ENCODE measurements at regions of chr11 and their contacts with region 1.

Region 1: DNA sequence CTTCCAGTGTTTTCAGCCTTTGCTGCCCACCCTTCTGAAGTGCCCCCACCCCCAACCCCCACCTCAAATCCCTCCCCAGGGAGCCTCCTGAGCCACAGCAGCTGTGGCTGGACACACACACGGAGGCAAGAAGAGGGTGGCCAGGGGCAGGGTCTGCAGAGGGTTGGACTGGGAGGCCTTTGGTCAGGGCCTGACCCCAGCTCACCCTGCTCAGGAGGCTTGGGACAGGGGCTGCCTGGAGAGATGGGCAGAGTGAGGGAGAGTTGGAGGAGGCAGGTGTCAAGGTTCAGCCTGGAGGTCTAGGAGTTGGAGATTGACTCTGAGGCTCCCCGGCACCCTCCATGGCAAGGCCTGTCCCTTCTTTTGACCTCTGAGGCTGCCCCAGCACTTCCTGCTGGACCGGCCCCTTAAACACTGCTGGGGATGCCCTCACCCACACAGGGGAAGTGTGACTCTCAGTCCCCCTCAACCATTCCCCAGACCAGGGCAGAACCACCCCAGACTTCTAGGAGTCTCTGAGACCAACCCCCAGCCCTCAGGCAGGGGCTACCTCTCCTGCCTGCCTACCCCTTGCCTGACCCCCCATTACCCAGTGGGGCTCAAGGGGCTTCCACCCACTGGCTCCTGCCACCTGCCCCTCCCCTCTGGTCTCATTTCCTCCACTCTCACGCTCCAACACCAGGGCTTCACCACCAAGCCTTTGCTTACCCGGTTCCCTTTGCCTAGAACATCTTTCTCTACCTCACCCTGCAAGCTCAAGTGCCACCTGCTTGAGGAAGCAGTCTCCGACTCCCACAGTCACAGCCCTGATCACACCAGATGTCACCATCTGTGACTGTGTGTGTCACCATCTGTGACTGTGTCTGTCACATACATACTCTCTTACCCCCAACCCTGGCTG is 8.6 kb downstream of the ARAP1 start:
- DNase-seq: no peak
- ATAC-seq: peak; percentile 53
- H3K4me3 ChIP-seq: peak overlapping the region; percentile 51; the same call in 1 of the 2 replicates
- H3K27ac ChIP-seq: peak overlapping the region; percentile 59
- H3K4me1 ChIP-seq: peaks cover 75% of the 10 kb centered on the region
- H3K27me3 ChIP-seq: no peaks in the 10 kb centered on the region
- CTCF ChIP-seq: no peak
- EP300 ChIP-seq: no peak
- POLR2A ChIP-seq: no peak
- RAD21 ChIP-seq: no peak

Region 2: DNA sequence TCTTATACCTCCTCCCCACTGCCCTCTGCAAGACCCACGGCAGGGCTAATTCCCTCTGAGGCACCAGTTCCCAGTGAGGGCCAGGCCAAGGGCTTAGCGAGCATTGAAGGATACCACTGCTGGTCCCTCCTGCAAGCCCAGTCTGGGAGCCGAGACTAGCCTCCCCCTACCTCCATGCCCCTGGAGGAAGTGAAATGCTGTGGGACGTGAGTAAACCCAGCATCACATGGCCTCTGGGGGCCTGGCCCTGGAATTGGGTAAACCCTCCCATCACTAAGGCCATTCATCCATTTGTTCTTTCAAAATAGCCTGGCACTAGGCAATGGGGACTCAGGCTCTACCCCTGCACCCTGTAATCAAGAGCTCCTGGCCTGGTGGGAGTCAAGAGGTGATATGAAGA is 16.1 kb before region 1 on chr11:
- CTCF ChIA-PET with region 1: interaction called, 89 read pairs
- POLR2A ChIA-PET with region 1: interaction called, 4 read pairs
- RAD21 ChIA-PET with region 1: interaction called, 18 read pairs
- SMC1A ChIA-PET with region 1: interaction called, 41 read pairs
- in situ Hi-C with region 1: no loop called
- intact Hi-C with region 1: no loop called
- DNase-seq: no peak
- ATAC-seq: 0 out of 3 replicates have a peak, but pooled peaks have one; percentile 22
- H3K4me3 ChIP-seq: no peak overlapping the region
- H3K27ac ChIP-seq: no peak overlapping the region
- H3K4me1 ChIP-seq: peaks cover 19% of the 10 kb centered on the region
- H3K27me3 ChIP-seq: no peaks in the 10 kb centered on the region
- CTCF ChIP-seq: no peak
- EP300 ChIP-seq: no peak
- POLR2A ChIP-seq: no peak
- RAD21 ChIP-seq: no peak

Region 3: DNA sequence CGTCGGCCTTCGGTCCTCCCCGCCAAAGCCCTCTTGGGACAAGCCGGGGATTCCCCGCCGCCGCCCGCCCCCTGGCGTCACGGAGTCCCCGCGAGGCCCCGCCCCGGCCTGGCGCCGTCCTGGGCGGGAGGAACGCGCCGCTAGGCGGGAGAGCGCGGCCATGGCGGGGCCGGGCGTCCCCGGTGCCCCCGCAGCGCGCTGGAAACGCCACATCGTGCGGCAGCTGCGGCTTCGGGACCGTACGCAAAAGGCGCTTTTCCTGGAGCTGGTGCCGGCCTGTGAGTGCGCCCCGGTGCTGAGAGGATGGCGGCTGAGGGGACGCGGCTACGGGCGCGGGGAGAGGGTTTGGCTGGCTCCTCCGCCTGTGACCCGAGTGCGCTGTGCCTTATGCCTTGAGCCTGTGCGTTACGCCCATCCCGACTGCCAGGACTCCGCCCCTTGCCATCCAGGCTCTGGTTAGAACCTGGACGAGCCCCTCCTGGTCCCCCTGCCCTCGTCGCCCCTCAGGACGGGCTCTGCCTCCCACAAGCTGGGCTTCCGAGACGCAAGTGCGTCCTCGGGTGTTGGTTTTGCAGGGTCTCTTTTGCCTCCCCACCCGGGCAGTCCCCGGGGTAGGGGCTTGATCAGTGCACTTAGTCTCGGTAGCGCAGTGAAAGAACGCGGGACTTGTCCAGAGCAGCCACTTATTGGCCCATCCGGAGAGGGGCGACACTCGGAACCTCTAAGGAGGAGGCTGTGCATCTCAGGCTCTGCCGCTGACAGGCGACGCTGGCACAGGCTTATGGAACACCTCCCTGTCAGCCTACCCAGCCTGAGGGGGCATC is 70.9 kb after region 1 on chr11 and contains the start of gene ATG16L2:
- CTCF ChIA-PET with region 1: interaction called, 4 read pairs
- POLR2A ChIA-PET with region 1: interaction called, 9 read pairs
- RAD21 ChIA-PET with region 1: interaction called, 3 read pairs
- SMC1A ChIA-PET with region 1: interaction called, 9 read pairs
- in situ Hi-C with region 1: no loop called
- intact Hi-C with region 1: loop called (anchors 5 kb)
- DNase-seq: no peak
- ATAC-seq: peak; percentile 74
- H3K4me3 ChIP-seq: peak within 1 kb of the TSS; percentile 89
- H3K27ac ChIP-seq: peak within 1 kb of the TSS; percentile 98
- H3K4me1 ChIP-seq: peaks cover 7% of the 10 kb centered on the region; the same call in 1 of the 2 replicates
- H3K27me3 ChIP-seq: no peaks in the 10 kb centered on the region
- CTCF ChIP-seq: peak in 2 of 3 experiments; percentile 15 to 19; a peak in 1 of 6 replicates
- EP300 ChIP-seq: 0 out of 4 replicates have a peak, but pooled peaks of 1 of the 2 experiments have one; percentile 3
- POLR2A ChIP-seq: peak; percentile 81
- RAD21 ChIP-seq: 0 out of 2 replicates have a peak, but pooled peaks have one; percentile 20
- polyA plus RNA-seq, gene ATG16L2: 1.9 to 5.3 TPM

Region 4: DNA sequence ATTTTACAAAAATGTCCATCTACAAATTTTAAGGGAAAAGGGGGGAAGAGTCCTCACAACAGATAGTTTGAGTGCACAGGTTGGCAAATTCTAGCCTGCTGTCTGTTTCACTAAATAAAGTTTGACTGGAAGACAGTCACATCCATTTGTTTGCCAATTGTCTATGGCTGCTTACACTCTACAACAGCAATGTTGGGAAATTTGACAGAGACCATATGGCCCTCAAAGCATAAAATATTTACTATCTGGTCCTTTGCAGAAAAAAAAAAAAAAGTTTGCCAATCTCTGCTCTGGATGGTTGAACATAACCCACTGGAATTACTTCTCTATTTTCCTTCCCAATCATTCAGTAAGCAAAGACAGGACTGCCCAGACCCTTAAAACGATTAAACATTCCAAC is 310.4 kb after region 1 on chr11:
- CTCF ChIA-PET with region 1: no interaction called
- POLR2A ChIA-PET with region 1: no interaction called
- RAD21 ChIA-PET with region 1: no interaction called
- SMC1A ChIA-PET with region 1: no interaction called
- in situ Hi-C with region 1: no loop called
- intact Hi-C with region 1: loop called (anchors 5 kb)
- DNase-seq: no peak
- ATAC-seq: no peak
- H3K4me3 ChIP-seq: no peak overlapping the region
- H3K27ac ChIP-seq: no peak overlapping the region
- H3K4me1 ChIP-seq: peaks cover 27% of the 10 kb centered on the region
- H3K27me3 ChIP-seq: no peaks in the 10 kb centered on the region
- CTCF ChIP-seq: no peak
- EP300 ChIP-seq: no peak
- POLR2A ChIP-seq: no peak
- RAD21 ChIP-seq: no peak